ENCODE measurements at regions of chr10 and their contacts with region 1.

Region 1: GRCh38 chr10:29304264-29305030 is 15.6 kb downstream of the LYZL1 start:
- DNase-seq: peak; percentile 78
- H3K4me3 Mint-ChIP-seq: no peak overlapping the region
- H3K27ac Mint-ChIP-seq: no peak overlapping the region
- H3K4me1 Mint-ChIP-seq: no peaks in the 10 kb centered on the region
- H3K27me3 Mint-ChIP-seq: peaks cover 12% of the 10 kb centered on the region
- CTCF ChIP-seq: peak; percentile 83

Region 2: DNA sequence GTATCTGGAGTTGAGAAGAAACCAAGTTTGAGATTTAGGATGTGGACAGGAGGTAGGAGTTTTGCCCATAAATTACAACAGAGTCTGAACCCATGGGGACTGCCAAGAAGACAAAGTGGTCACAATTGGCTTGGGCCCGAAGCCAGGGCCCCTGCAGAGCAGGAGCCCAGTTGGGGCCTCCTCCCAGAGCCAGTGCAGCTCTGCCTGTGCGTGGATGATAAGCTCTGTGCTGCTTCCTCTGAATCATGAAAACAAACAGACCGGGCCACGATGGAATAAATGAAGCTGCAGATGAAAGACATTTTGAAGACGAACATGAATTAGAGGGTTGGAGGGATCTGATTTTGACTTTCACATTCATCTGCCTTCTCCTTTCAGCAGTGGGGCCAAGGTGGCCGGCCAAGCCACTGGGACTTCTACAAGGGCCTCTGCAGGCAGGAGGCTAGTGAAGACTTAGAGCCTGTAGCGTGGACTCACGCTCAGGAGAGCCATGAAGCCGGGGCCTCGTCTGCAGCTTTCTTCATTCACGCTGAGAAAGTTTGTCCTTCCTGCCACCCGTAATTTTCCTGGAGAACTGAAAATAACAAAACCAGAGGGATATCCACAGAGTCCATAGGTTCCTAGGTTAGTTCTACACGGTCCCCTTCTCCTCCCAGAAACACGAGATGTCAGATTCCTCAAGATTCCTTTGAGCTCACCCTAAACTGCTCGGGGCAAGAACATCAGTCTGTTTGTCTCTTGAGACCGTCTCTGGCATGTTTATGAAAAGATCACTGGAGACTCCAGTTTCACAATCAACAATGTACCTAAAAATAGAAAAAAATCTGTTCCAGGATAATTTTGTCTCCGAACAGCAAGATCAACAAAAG is 172.3 kb before region 1 on chr10:
- CTCF ChIA-PET with region 1: interaction called, 11 read pairs
- POLR2A ChIA-PET with region 1: interaction called, 4 read pairs
- intact Hi-C with region 1: loop called (anchors 2 kb)
- DNase-seq: peak; percentile 44
- H3K4me3 Mint-ChIP-seq: no peak overlapping the region
- H3K27ac Mint-ChIP-seq: no peak overlapping the region
- H3K4me1 Mint-ChIP-seq: peaks cover 8% of the 10 kb centered on the region
- H3K27me3 Mint-ChIP-seq: peaks cover 5% of the 10 kb centered on the region
- CTCF ChIP-seq: no peak

Region 3: DNA sequence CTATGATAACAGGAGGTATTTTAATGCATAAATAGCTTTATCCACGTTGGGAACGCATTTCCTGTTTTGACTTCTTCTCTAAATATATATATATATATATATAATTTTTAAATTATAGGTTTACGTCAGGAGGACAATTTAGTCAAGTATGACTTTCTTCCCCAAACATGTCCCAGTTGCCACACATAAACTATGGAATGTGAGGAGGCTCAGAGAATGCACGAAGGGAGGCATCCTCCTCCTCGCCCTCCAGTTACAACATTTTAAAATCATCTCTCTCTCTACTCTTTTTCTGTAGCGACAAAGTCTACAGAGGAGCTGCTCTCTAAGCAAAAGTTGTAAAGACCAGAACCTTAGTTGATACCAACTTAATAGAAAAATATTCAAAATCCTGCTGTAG is 122.5 kb before region 1 on chr10:
- CTCF ChIA-PET with region 1: no interaction called
- POLR2A ChIA-PET with region 1: no interaction called
- intact Hi-C with region 1: no loop called
- DNase-seq: no peak
- H3K4me3 Mint-ChIP-seq: no peak overlapping the region
- H3K27ac Mint-ChIP-seq: no peak overlapping the region
- H3K4me1 Mint-ChIP-seq: no peaks in the 10 kb centered on the region
- H3K27me3 Mint-ChIP-seq: peaks cover 60% of the 10 kb centered on the region
- CTCF ChIP-seq: no peak

Region 4: GRCh38 chr10:29386342-29386999 is 82.0 kb after region 1 on chr10:
- CTCF ChIA-PET with region 1: no interaction called
- POLR2A ChIA-PET with region 1: no interaction called
- intact Hi-C with region 1: no loop called
- DNase-seq: peak; percentile 48
- H3K4me3 Mint-ChIP-seq: no peak overlapping the region
- H3K27ac Mint-ChIP-seq: no peak overlapping the region
- H3K4me1 Mint-ChIP-seq: no peaks in the 10 kb centered on the region
- H3K27me3 Mint-ChIP-seq: peaks cover 17% of the 10 kb centered on the region
- CTCF ChIP-seq: peak; percentile 65